CD4-positive, alpha-beta memory T cell (primary cell): ENCODE measurements at regions of chr12 and their contacts with region 1.

Region 1: GRCh38 chr12:104456417-104456949 is at the start of gene CHST11:
- DNase-seq: peak; percentile 66 to 85 (median 70)
- H3K4me3 ChIP-seq: peak within 1 kb of the TSS; percentile 72 to 99
- H3K4me3 Mint-ChIP-seq: peak within 1 kb of the TSS; percentile 98 to 100 (median 99)
- H3K27ac ChIP-seq: peak within 1 kb of the TSS; percentile 83
- H3K27ac Mint-ChIP-seq: peak within 1 kb of the TSS; percentile 85 to 98 (median 96)
- H3K4me1 ChIP-seq: peaks cover 34% of the 10 kb centered on the region
- H3K4me1 Mint-ChIP-seq: peaks cover 28 to 66% (median 39%) of the 10 kb centered on the region in 4 donors
- H3K27me3 ChIP-seq: no peaks in the 10 kb centered on the region
- H3K27me3 Mint-ChIP-seq: no peaks in the 10 kb centered on the region
- total RNA-seq, gene CHST11: 55.1 to 55.8 TPM

Region 2: DNA sequence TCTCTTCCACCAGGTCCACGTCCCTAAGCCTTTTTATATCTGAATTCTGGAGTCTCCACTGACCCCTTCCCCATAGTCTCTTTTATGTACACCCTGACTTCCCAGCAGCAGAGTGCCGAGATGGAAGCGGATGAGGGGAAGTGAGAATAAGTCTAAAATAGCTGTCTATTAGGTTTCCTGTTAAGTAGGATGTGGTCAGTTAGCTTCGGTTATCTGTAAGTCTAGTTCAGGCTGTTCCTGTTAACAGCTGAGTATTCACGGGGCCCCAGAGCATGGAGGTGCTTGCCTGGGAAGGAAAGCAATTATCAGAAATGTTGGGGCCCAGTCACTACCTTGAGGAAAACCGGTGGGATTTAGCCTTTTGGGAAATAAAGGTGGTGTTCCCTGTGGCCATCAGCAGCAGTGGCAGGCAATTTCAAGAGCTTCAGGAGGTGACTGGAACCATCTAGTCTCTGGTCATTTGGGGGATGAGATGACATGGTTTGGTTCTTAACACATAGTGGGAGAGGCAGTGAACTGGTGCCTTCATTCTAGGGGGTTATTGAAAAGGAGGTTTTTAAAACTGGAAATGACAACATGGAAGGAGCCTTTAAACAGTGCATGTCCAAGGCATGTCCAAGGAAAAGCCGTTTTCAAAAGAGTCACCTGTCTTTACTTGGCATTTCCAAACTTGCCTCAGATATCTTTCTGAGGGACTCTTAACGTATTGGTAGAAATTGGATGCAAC is 22.1 kb after region 1 on chr12:
- CTCF ChIA-PET with region 1: interaction called, 23 read pairs
- POLR2A ChIA-PET with region 1: interaction called, 172 read pairs
- intact Hi-C with region 1: no loop called
- DNase-seq: peak; percentile 43 to 63 (median 55)
- H3K4me3 ChIP-seq: peak overlapping the region in 1 of 2 donors; percentile 25
- H3K4me3 Mint-ChIP-seq: peak overlapping the region; percentile 87 to 98 (median 93)
- H3K27ac ChIP-seq: peak overlapping the region; percentile 41
- H3K27ac Mint-ChIP-seq: peak overlapping the region; percentile 92 to 99 (median 97)
- H3K4me1 ChIP-seq: peaks cover 87% of the 10 kb centered on the region
- H3K4me1 Mint-ChIP-seq: peaks cover 73 to 92% (median 83%) of the 10 kb centered on the region in 4 donors
- H3K27me3 ChIP-seq: no peaks in the 10 kb centered on the region
- H3K27me3 Mint-ChIP-seq: no peaks in the 10 kb centered on the region

Region 3: GRCh38 chr12:104549815-104550480 is 93.5 kb after region 1 on chr12:
- CTCF ChIA-PET with region 1: interaction called, 3 read pairs
- POLR2A ChIA-PET with region 1: interaction called, 3 read pairs
- intact Hi-C with region 1: loop called (anchors 5 kb)
- DNase-seq: no peak
- H3K4me3 ChIP-seq: no peak overlapping the region
- H3K4me3 Mint-ChIP-seq: no peak overlapping the region
- H3K27ac ChIP-seq: no peak overlapping the region
- H3K27ac Mint-ChIP-seq: peak overlapping the region in 2 of 7 donors; percentile 10 to 14
- H3K4me1 ChIP-seq: peaks cover 75% of the 10 kb centered on the region
- H3K4me1 Mint-ChIP-seq: peaks cover 62 to 96% (median 81%) of the 10 kb centered on the region in 4 donors
- H3K27me3 ChIP-seq: no peaks in the 10 kb centered on the region
- H3K27me3 Mint-ChIP-seq: no peaks in the 10 kb centered on the region

Region 4: GRCh38 chr12:104653730-104654664 is 197.5 kb after region 1 on chr12:
- CTCF ChIA-PET with region 1: interaction called, 3 read pairs
- POLR2A ChIA-PET with region 1: no interaction called
- intact Hi-C with region 1: loop called (anchors 5 kb)
- DNase-seq: peak in 2 of 5 donors; percentile 14 to 15
- H3K4me3 ChIP-seq: no peak overlapping the region
- H3K4me3 Mint-ChIP-seq: no peak overlapping the region
- H3K27ac ChIP-seq: no peak overlapping the region
- H3K27ac Mint-ChIP-seq: peak overlapping the region; percentile 25 to 88 (median 70)
- H3K4me1 ChIP-seq: peaks cover 4% of the 10 kb centered on the region
- H3K4me1 Mint-ChIP-seq: peaks cover 37 to 80% (median 59%) of the 10 kb centered on the region in 4 donors
- H3K27me3 ChIP-seq: no peaks in the 10 kb centered on the region
- H3K27me3 Mint-ChIP-seq: no peaks in the 10 kb centered on the region

Region 5: GRCh38 chr12:104877123-104877705 is 420.7 kb after region 1 on chr12:
- CTCF ChIA-PET with region 1: no interaction called
- POLR2A ChIA-PET with region 1: no interaction called
- intact Hi-C with region 1: loop called (anchors 2 kb)
- DNase-seq: peak in 4 of 5 donors; percentile 27 to 31 (median 30)
- H3K4me3 ChIP-seq: no peak overlapping the region
- H3K4me3 Mint-ChIP-seq: no peak overlapping the region
- H3K27ac ChIP-seq: no peak overlapping the region
- H3K27ac Mint-ChIP-seq: no peak overlapping the region
- H3K4me1 ChIP-seq: no peaks in the 10 kb centered on the region
- H3K4me1 Mint-ChIP-seq: peaks cover 0 to 2% (median 0%) of the 10 kb centered on the region in 4 donors
- H3K27me3 ChIP-seq: no peaks in the 10 kb centered on the region
- H3K27me3 Mint-ChIP-seq: no peaks in the 10 kb centered on the region

Region 6: GRCh38 chr12:105053116-105053572 is 596.7 kb after region 1 on chr12:
- CTCF ChIA-PET with region 1: interaction called, 4 read pairs
- POLR2A ChIA-PET with region 1: no interaction called
- intact Hi-C with region 1: loop called (anchors 2 kb)
- DNase-seq: peak; percentile 71 to 77 (median 75)
- H3K4me3 ChIP-seq: no peak overlapping the region
- H3K4me3 Mint-ChIP-seq: no peak overlapping the region
- H3K27ac ChIP-seq: no peak overlapping the region
- H3K27ac Mint-ChIP-seq: no peak overlapping the region
- H3K4me1 ChIP-seq: no peaks in the 10 kb centered on the region
- H3K4me1 Mint-ChIP-seq: peaks cover 0 to 3% (median under 1%) of the 10 kb centered on the region in 4 donors
- H3K27me3 ChIP-seq: no peaks in the 10 kb centered on the region
- H3K27me3 Mint-ChIP-seq: peaks cover 2 to 3% of the 10 kb centered on the region in 2 donors